Testis (tissue), 5 donors: ENCODE measurements at regions of chr6 and their contacts with region 1.

Region 1: GRCh38 chr6:63764318-63764916 is 128.8 kb downstream of the PHF3 start:
- DNase-seq: no peak
- H3K4me3 ChIP-seq: no peak overlapping the region
- H3K27ac ChIP-seq: no peak overlapping the region
- H3K4me1 ChIP-seq: no peaks in the 10 kb centered on the region
- H3K27me3 ChIP-seq: no peaks in the 10 kb centered on the region
- CTCF ChIP-seq: peak in 2 of 3 experiments; percentile 13 to 96
- POLR2A ChIP-seq: no peak

Region 2: GRCh38 chr6:63458480-63459115 is 305.8 kb before region 1 on chr6:
- intact Hi-C with region 1: no loop called
- DNase-seq: no peak
- H3K4me3 ChIP-seq: no peak overlapping the region
- H3K27ac ChIP-seq: no peak overlapping the region
- H3K4me1 ChIP-seq: no peaks in the 10 kb centered on the region
- H3K27me3 ChIP-seq: no peaks in the 10 kb centered on the region
- CTCF ChIP-seq: no peak
- POLR2A ChIP-seq: no peak

Region 3: DNA sequence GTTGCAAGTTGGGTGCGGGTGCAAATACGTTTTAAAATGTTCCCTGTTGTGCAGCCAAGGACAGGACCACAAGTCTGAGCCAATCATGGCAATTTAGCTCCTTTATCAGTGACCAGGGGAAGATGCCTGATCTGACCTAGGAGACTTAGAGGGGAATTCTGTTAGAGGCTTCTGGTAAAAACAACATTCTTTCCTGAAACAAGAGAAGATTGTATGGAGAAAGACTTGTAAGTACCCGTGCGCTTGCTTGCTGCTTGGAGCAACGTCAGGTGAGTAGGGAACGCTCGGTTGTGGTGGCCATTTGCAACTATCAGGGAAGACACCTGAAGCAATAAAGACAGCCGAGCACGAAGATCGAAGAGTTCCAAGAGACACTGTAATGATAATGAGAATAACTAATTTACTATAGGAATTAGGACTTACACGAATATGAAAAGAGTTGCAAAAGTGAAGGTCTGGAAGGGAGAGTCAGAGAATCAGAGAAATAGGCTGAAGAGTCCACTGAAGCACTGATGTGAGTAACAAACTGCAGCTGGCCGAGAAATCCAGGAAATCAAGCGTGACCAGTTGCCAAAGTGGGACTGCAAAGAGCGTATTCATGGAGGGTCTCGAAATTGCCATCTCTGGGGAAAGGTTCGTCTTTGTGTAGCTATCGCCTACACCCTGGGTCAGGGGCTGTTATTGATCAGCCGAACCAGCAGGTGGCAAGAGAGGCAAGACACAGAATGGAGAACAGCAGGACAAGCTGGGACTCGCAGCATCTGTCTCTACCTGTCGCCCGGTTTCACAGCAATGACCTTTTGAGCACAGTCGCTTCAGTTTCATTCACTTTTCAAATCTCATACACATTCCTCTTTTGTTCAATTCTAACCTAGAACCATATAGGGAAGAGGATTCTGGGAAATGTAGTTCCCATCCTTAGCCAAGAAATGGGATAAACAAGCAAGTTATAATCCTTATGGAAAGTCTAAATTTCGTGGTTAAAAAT is 166.1 kb before region 1 on chr6:
- intact Hi-C with region 1: loop called (anchors 5 kb)
- DNase-seq: peak; percentile 81
- H3K4me3 ChIP-seq: peak overlapping the region; percentile 33 to 41
- H3K27ac ChIP-seq: no peak overlapping the region
- H3K4me1 ChIP-seq: no peaks in the 10 kb centered on the region
- H3K27me3 ChIP-seq: no peaks in the 10 kb centered on the region
- CTCF ChIP-seq: peak; percentile 68 to 76 (median 71)
- POLR2A ChIP-seq: no peak

Region 4: GRCh38 chr6:63644668-63645326 is 119.6 kb before region 1 on chr6:
- intact Hi-C with region 1: no loop called
- DNase-seq: no peak
- H3K4me3 ChIP-seq: no peak overlapping the region
- H3K27ac ChIP-seq: no peak overlapping the region
- H3K4me1 ChIP-seq: peaks cover 11% of the 10 kb centered on the region
- H3K27me3 ChIP-seq: no peaks in the 10 kb centered on the region
- CTCF ChIP-seq: no peak
- POLR2A ChIP-seq: no peak

Region 5: GRCh38 chr6:64023693-64024092 is 259.3 kb after region 1 on chr6:
- intact Hi-C with region 1: no loop called
- DNase-seq: no peak
- H3K4me3 ChIP-seq: no peak overlapping the region
- H3K27ac ChIP-seq: no peak overlapping the region
- H3K4me1 ChIP-seq: no peaks in the 10 kb centered on the region
- H3K27me3 ChIP-seq: no peaks in the 10 kb centered on the region
- CTCF ChIP-seq: no peak
- POLR2A ChIP-seq: no peak